Ovary (tissue), 10 donors: ENCODE measurements at regions of chr5 and their contacts with region 1.

Region 1: DNA sequence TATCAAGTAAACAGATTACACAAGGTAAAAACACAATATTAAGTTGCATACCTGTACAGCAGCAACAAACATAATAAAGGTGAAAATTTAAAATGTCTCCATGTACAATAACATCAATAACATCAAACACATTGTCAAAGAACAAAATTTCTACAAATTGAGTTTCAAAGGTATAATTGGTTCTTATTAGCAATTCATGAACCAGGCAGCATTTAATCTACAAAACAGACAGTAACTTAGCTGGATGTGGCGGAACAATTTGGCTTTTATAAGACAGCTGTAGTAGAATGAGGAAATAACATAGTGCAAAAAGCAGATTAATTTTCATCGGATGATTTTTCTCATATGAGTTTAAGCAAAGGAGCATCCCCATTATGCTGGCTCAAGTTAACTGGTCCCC is 1176.8 kb downstream of the EFNA5 start:
- DNase-seq: no peak
- H3K4me3 ChIP-seq: no peak overlapping the region
- H3K27ac ChIP-seq: no peak overlapping the region
- H3K4me1 ChIP-seq: no peaks in the 10 kb centered on the region
- H3K27me3 ChIP-seq: no peaks in the 10 kb centered on the region
- CTCF ChIP-seq: no peak
- EP300 ChIP-seq: no peak
- POLR2A ChIP-seq: no peak

Region 2: GRCh38 chr5:106167766-106168165 is 326.1 kb before region 1 on chr5:
- intact Hi-C with region 1: no loop called
- DNase-seq: no peak
- H3K4me3 ChIP-seq: no peak overlapping the region
- H3K27ac ChIP-seq: no peak overlapping the region
- H3K4me1 ChIP-seq: no peaks in the 10 kb centered on the region
- H3K27me3 ChIP-seq: no peaks in the 10 kb centered on the region
- CTCF ChIP-seq: no peak
- EP300 ChIP-seq: no peak
- POLR2A ChIP-seq: no peak

Region 3: DNA sequence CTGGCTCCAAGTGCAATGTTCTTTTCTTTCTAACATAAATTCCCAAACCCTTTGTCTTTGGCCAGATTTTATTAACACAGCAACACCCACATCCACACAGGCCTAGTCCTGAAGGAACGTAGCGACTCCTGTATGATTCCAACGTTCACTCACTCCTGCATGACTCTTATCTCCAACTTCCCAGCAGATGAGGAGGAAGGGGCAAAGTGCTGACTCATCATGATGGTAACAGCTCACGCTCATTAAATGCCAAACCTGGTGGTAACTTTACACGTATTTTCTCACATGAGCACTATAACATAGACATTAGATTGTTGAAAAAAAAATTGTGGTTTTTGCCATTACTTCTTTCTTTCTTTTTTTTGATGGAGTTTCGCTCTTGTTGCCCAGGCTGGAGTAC is 172.7 kb before region 1 on chr5:
- intact Hi-C with region 1: no loop called
- DNase-seq: no peak
- H3K4me3 ChIP-seq: no peak overlapping the region
- H3K27ac ChIP-seq: no peak overlapping the region
- H3K4me1 ChIP-seq: no peaks in the 10 kb centered on the region
- H3K27me3 ChIP-seq: no peaks in the 10 kb centered on the region
- CTCF ChIP-seq: no peak
- EP300 ChIP-seq: no peak
- POLR2A ChIP-seq: no peak

Region 4: DNA sequence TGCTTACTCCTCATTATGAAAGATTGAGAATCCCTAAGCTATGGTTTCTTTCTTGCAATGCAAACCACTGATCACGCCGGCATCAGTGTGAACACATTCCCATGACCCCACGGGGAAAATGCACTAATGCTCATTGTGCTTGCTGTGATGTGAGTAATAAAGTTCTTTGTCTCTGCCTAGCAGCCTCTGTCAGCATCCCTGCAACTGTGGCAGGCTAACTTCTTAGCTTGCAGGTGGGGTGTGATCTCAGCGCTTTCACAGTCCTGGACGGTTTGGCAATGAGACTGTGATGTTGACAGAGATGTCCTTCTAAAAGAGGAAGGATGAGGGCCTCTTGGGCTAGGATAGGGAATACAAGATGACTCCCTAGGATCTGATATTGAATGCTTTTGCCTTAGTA is 41.9 kb before region 1 on chr5:
- intact Hi-C with region 1: loop called in 1 of 4 experiments (anchors 1 kb)
- DNase-seq: no peak
- H3K4me3 ChIP-seq: no peak overlapping the region
- H3K27ac ChIP-seq: no peak overlapping the region
- H3K4me1 ChIP-seq: no peaks in the 10 kb centered on the region
- H3K27me3 ChIP-seq: no peaks in the 10 kb centered on the region
- CTCF ChIP-seq: no peak
- EP300 ChIP-seq: no peak
- POLR2A ChIP-seq: no peak